PC-9 (cell line): ENCODE measurements at regions of chr22 and their contacts with region 1.

Region 1: GRCh38 chr22:46335201-46336118 is at the start of gene TRMU:
- DNase-seq: peak; percentile 75 to 80
- H3K4me3 ChIP-seq: peak within 1 kb of the TSS; percentile 77
- H3K27ac ChIP-seq: peak within 1 kb of the TSS; percentile 36; the same call in 1 of the 2 replicates
- H3K4me1 ChIP-seq: peaks cover 16% of the 10 kb centered on the region
- H3K27me3 ChIP-seq: no peaks in the 10 kb centered on the region
- CTCF ChIP-seq: no peak
- total RNA-seq, gene TRMU: 51.5 and 58.2 TPM in 2 replicates

Region 2: GRCh38 chr22:44796972-44797725 is 1538.3 kb before region 1 on chr22:
- CTCF ChIA-PET with region 1: no interaction called
- POLR2A ChIA-PET with region 1: interaction called, 12 read pairs
- intact Hi-C with region 1: no loop called
- DNase-seq: no peak
- H3K4me3 ChIP-seq: no peak overlapping the region
- H3K27ac ChIP-seq: no peak overlapping the region
- H3K4me1 ChIP-seq: no peaks in the 10 kb centered on the region
- H3K27me3 ChIP-seq: no peaks in the 10 kb centered on the region
- CTCF ChIP-seq: no peak